Activated T-helper 1 cell treated with anti-CD3 and anti-CD28 coated beads, Interleukin-12 subunit alpha, Interleukin-12 subunit beta, Interleukin-2, Interleukin-4 antibody, amounts not matched to agents 30 ng/mL and 10 ng/mL and 1 ng/mL, durations not matched to agents 14 hours and 24 hours and 36 hours (primary cell): ENCODE measurements at regions of chrX and their contacts with region 1.

Region 1: DNA sequence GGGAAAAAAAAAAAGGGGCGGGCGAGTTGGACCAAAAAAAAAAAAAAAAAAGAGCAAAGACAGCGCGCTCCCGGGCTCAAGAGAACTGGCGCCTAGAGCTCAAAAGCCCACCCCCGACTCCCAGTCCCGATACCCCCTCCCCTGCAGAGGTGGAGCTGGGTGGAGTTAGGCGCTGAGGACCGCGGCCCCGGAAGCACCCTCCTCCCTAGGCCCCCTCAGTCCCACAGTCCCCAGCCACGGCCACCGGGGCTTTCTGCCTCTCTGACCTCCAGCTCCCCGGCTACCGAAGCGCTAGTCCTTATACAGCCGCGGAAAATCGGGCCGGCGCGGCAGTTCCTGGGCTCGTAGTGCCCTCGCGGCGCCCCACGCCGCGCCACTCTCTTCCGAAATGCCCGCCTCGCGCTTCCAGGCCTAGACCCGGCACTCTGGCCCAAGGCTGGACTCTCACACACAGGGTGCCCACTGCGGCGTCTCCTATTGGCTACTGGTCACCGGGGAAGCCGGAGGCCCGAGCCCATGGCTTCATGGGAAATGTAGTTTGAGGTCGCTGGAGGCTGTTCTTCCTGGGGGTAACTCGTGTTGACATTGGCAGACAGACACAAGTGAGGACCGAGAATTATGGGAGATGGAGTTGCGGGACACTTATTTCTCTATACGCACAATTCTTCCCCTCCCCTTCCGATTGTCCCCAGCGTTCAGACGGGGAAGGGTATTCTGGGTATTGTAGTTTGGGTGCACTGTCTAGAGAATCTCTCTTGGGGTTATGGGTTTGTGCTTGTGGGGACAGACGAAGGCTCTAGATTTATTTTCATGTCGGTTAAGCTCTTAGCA is at the start of gene ENOX2:
- DNase-seq: peak; percentile 83
- H3K4me3 Mint-ChIP-seq: no peak within 1 kb of the TSS
- H3K27ac Mint-ChIP-seq: peak within 1 kb of the TSS; percentile 83
- H3K4me1 Mint-ChIP-seq: peaks cover 9% of the 10 kb centered on the region
- H3K27me3 Mint-ChIP-seq: peaks cover 5% of the 10 kb centered on the region
- total RNA-seq, gene ENOX2: 15.6 and 20.5 TPM in 2 replicates

Region 2: GRCh38 chrX:130165703-130166502 is 737.1 kb before region 1 on chrX and contains the start of gene AIFM1:
- intact Hi-C with region 1: loop called (anchors 5 kb)
- DNase-seq: peak; percentile 86
- H3K4me3 Mint-ChIP-seq: peak within 1 kb of the TSS; percentile 95
- H3K27ac Mint-ChIP-seq: peak within 1 kb of the TSS; percentile 98
- H3K4me1 Mint-ChIP-seq: peaks cover 20% of the 10 kb centered on the region
- H3K27me3 Mint-ChIP-seq: no peaks in the 10 kb centered on the region
- total RNA-seq, gene AIFM1: 46.0 and 50.2 TPM in 2 replicates

Region 3: DNA sequence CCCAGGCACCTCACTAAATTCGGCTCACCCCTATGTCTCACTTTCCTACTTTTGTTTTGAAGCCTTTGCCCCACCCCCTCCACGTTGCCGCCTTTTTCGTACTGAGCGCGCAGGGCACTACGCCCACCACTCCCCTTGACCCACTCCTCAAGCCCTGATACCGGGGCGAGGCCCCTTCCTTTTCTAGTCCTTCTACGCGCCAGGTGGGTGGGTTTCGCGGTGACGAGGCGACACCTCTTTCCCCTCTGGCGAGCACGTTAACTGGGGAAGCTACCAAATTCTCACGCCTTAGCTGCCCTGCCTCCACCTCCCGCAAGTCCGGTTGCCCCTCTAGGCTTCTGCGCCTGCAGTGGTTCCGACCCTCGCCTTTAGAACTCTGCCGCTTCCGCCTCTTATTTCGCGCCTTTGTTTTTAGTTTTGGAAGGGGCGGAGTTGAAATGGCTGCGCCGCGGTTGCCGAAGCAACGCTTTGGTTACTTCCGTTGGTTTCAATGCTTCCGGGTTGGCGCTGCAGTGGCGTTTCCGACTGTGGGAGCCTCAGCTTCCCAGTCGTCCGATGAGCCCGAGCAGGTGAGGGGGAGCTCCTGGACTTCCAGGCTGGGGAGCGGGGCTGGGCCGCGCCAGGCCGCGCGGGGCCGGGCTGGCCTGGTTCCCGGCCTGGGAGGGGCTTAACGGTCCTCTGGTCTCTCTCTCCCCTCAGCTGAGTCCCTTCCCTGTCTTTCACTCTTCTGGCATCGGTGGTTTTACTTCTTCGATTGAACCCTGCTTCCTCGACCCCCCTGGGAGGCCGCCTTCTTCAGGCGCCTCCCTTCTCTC is 563.4 kb before region 1 on chrX and contains the start of gene SLC25A14:
- intact Hi-C with region 1: loop called (anchors 1 kb)
- DNase-seq: peak; percentile 69
- H3K4me3 Mint-ChIP-seq: peak within 1 kb of the TSS; percentile 94
- H3K27ac Mint-ChIP-seq: peak within 1 kb of the TSS; percentile 96
- H3K4me1 Mint-ChIP-seq: peaks cover 15% of the 10 kb centered on the region
- H3K27me3 Mint-ChIP-seq: peaks cover 2% of the 10 kb centered on the region
- total RNA-seq, gene SLC25A14: 8.1 and 10.5 TPM in 2 replicates

Region 4: GRCh38 chrX:130401415-130402207 is 501.4 kb before region 1 on chrX and contains the start of gene RBMX2:
- intact Hi-C with region 1: loop called (anchors 1 kb)
- DNase-seq: peak; percentile 64
- H3K4me3 Mint-ChIP-seq: peak within 1 kb of the TSS; percentile 100
- H3K27ac Mint-ChIP-seq: peak within 1 kb of the TSS; percentile 89
- H3K4me1 Mint-ChIP-seq: no peaks in the 10 kb centered on the region
- H3K27me3 Mint-ChIP-seq: peaks cover 6% of the 10 kb centered on the region
- total RNA-seq, gene RBMX2: 26.0 and 26.3 TPM in 2 replicates

Region 5: DNA sequence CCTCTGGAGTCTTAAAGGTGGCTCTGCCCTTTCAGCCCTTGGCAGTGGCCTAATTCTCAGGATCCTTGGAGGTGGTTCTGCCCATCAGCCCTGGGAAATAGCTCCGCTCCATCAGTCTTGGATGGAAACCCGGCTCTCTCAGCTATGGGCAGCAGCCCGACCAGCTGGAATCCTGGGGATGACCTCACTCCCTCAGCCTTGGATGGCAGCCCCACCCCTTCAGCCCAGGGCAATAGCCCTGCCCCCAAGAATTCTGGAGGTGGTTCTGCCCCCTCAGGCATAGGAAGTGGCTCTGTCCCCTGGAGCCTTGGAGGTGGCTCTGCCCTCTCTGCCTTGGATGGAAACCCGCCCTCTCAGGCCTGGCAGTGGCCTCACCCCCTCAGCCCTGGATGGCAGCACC is 373.5 kb before region 1 on chrX:
- intact Hi-C with region 1: no loop called
- DNase-seq: no peak
- H3K4me3 Mint-ChIP-seq: no peak overlapping the region
- H3K27ac Mint-ChIP-seq: no peak overlapping the region
- H3K4me1 Mint-ChIP-seq: no peaks in the 10 kb centered on the region
- H3K27me3 Mint-ChIP-seq: peaks cover 4% of the 10 kb centered on the region

Region 6: DNA sequence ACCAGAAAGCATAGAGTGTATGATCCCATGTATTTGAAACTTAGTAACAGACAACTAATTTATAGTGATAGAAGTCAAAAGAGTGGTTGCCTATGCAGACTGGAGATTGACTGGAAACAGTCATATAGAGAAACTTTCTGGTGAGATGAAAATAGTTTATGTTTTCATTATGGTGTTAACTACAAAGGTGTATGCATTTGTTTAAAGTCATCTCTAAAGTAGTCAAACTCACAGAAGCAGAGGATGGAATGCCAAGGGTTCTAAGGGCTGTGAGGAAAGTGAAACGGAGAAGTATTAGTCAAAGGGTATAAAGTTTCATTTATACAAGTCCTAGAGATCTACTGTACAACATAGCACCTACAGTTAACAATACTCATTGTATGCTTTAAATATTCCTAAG is 45.8 kb before region 1 on chrX:
- intact Hi-C with region 1: loop called (anchors 1 kb)
- DNase-seq: no peak
- H3K4me3 Mint-ChIP-seq: no peak overlapping the region
- H3K27ac Mint-ChIP-seq: peak overlapping the region; percentile 56
- H3K4me1 Mint-ChIP-seq: peaks cover 9% of the 10 kb centered on the region
- H3K27me3 Mint-ChIP-seq: no peaks in the 10 kb centered on the region

Region 7: GRCh38 chrX:130916636-130917422 is 13.8 kb after region 1 on chrX:
- intact Hi-C with region 1: loop called (anchors 2 kb)
- DNase-seq: no peak
- H3K4me3 Mint-ChIP-seq: no peak overlapping the region
- H3K27ac Mint-ChIP-seq: no peak overlapping the region
- H3K4me1 Mint-ChIP-seq: no peaks in the 10 kb centered on the region
- H3K27me3 Mint-ChIP-seq: no peaks in the 10 kb centered on the region

Region 8: DNA sequence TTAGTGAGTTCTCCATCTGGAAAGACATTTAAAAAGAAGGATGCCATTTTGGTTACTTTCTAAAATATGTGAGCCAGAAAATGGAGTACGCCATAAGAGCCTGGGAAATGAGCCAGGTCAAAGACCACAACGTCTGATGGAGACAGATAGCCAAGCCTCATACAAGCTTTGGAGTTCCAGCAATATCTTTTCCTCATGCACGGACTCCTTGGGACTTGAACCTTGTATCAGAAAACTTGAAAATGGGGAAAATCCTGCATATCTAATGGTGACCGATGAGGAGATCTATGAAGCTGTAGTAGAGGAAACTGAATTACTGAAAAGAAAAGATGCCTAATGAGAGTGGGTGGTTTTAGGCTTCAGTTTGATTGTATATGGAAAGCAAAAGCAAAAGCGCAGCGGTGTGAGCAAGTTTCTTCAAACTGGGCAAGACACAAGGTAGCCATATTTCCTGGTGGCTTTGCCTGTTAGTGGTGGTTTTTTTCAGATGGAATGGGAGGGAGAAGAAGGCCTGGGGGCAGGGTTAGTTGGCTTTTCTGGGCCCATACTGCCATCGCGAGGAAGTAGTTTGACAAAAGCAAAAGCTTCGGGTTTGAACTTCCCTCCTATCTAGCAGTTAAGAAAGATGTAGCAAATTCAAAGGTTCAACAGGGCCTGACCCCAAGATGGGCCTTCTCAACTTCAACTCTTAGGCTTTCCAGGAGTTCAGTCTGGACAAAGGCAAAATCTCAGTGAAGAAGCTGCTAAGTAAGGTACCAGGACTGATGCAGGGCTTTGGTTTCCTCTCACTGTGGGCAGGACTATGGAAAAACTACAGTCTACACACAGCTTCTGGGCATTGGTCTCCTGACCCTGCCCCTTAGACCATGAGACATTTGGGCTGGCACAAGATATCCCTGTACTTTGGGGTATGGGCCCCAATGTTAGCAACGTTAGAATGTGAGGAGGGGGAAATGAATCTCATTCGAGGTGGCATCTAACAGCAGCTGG is 910.1 kb after region 1 on chrX:
- intact Hi-C with region 1: loop called (anchors 5 kb)
- DNase-seq: peak; percentile 63
- H3K4me3 Mint-ChIP-seq: peak overlapping the region; percentile 76
- H3K27ac Mint-ChIP-seq: peak overlapping the region; percentile 89
- H3K4me1 Mint-ChIP-seq: peaks cover 36% of the 10 kb centered on the region
- H3K27me3 Mint-ChIP-seq: no peaks in the 10 kb centered on the region